ENCODE measurements at regions of chr9 and their contacts with region 1.

Region 1: DNA sequence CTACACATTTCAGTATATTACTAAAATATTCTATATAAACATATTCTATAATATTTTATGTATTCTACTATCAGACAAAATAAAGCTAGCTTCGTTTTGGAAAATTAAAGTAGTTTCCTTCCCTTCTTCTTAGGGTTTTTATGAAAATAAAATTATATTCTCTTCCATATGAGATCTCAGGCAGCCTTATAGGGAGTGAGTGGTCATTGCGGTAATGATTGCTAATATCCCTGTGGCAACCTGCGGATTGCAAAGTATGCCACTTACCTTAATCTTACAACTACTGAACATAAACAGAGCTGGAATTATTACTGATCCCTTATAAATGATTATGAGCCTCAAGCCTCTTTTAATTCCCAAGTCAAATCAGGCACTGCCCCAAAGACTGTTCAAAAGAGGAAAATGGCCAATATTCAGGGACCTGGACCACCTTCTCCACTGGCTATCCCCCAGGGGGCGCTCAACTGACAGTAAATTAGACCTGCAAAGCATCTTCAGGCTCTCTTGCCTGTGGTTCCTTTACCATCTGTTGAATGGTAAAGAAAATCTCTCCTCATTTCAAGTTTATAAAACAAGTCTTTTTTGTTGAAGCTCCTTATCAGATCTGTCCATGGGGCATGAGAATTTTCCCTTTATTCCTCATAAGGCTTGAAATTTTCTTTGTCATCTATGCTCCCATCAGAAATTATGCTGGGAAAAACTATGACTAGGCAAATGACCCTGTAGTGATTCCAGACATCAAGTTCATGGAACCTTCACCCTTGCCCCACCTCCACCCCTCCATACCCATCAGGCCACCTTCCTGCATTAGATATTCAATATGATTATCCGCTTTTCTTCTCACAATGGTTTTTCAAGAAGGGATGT is 163.9 kb downstream of the CEMIP2 start:
- DNase-seq: peak; percentile 76 to 81 (median 78)
- ATAC-seq: peak in 3 of 4 donors; percentile 68 to 86 (median 78)
- H3K4me3 ChIP-seq: no peak overlapping the region
- H3K27ac ChIP-seq: no peak overlapping the region
- H3K4me1 ChIP-seq: peaks cover 0 to 3% (median 0%) of the 10 kb centered on the region in 12 donors
- H3K27me3 ChIP-seq: no peaks in the 10 kb centered on the region
- CTCF ChIP-seq: peak; percentile 64 to 83 (median 76)
- POLR2A ChIP-seq: no peak

Region 2: DNA sequence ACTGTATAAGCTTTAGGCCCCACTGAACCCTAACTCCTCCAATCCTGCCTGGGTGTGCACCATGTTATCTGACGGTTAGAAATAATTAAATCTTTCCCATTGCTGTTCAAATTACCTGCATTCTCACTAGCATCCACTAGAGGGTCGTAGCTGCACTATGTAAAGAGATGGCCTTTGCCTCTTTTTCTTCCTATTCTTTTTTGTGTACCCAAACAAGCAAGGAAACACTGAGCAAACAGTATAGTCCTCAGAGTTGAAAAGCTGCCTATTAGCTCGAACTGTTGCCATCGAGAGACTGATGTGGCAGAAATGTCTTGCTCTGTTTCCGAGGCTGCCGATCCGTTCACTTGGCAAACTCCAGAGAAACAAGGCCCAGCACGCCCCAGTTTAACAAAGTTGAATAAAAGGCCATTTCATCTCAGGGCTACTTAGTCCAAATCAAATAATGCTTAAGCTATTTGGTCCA is 319.2 kb before region 1 on chr9:
- intact Hi-C with region 1: loop called in 1 of 10 experiments (anchors 5 kb)
- DNase-seq: peak in 2 of 5 donors; percentile 17 to 31
- ATAC-seq: peak; percentile 65 to 76 (median 72)
- H3K4me3 ChIP-seq: no peak overlapping the region
- H3K27ac ChIP-seq: no peak overlapping the region
- H3K4me1 ChIP-seq: peaks cover 0 to 5% (median 0%) of the 10 kb centered on the region in 12 donors
- H3K27me3 ChIP-seq: no peaks in the 10 kb centered on the region
- CTCF ChIP-seq: peak; percentile 72 to 91 (median 84)
- POLR2A ChIP-seq: no peak

Region 3: GRCh38 chr9:71620746-71621145 is 16.3 kb after region 1 on chr9:
- intact Hi-C with region 1: no loop called
- DNase-seq: no peak
- ATAC-seq: no peak
- H3K4me3 ChIP-seq: no peak overlapping the region
- H3K27ac ChIP-seq: no peak overlapping the region
- H3K4me1 ChIP-seq: no peaks in the 10 kb centered on the region
- H3K27me3 ChIP-seq: no peaks in the 10 kb centered on the region
- CTCF ChIP-seq: no peak
- POLR2A ChIP-seq: no peak

Region 4: DNA sequence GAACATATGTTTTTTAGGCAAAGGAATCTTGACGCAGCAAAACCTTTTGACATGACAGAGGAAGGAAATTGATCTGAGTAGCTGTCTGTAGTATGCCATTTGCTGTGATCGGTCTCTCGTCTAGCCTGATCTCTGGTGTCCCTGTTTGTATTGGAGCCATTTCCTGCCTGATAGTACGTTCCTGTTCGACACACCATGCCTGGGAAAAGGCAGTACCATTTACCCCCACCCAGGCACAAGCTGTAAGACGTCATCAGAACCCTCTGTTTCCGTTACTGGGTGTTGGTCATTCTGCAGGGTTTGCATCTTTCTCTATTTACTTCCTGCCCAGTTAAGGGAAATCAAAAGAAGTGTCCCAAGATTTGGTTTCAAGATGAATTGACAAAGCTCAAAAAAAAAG is 34.2 kb after region 1 on chr9:
- intact Hi-C with region 1: no loop called
- DNase-seq: peak in 4 of 5 donors; percentile 46 to 57 (median 53)
- ATAC-seq: peak; percentile 86 to 96 (median 94)
- H3K4me3 ChIP-seq: peak overlapping the region in 1 of 12 donors; percentile 6
- H3K27ac ChIP-seq: peak overlapping the region; percentile 9 to 92 (median 55)
- H3K4me1 ChIP-seq: peaks cover 0 to 58% (median 0%) of the 10 kb centered on the region in 12 donors
- H3K27me3 ChIP-seq: no peaks in the 10 kb centered on the region
- CTCF ChIP-seq: no peak
- POLR2A ChIP-seq: no peak

Region 5: DNA sequence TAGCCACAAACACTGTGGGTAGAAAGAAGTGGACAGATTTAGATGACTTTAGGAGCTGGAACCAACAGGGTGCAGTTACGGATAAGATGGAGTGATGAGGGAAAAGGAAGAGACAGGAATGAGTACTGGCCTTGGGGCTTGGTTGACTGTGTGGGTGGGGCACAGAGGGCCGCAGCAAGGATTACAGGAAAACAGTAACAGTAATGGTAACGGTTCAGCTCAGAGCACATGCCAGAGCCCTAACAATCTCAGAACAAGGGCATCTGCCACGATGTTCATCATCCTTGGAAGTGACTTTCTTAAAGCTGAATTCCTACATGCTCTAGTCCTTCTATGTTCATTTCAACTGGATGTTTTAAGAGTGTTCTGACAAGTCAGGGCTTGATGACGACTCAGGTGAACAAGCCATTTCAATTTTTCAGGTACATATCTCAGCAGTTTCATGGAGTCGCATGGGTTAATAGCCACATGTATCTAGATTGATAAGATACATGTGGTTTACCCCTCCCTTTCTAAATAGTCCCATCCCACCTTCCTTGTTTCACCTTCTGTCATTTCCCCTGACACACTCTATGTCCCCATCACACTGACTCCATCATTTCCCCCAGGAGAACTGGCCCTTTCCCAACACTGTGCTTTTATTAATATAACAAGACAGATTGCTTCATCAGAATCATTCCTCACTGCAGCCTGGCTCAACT is 98.9 kb after region 1 on chr9:
- intact Hi-C with region 1: loop called in 1 of 10 experiments (anchors 10 kb)
- DNase-seq: no peak
- ATAC-seq: peak in 3 of 4 donors; percentile 24 to 79 (median 72)
- H3K4me3 ChIP-seq: no peak overlapping the region
- H3K27ac ChIP-seq: no peak overlapping the region
- H3K4me1 ChIP-seq: peaks cover 0 to 19% (median 4%) of the 10 kb centered on the region in 12 donors
- H3K27me3 ChIP-seq: no peaks in the 10 kb centered on the region
- CTCF ChIP-seq: no peak
- POLR2A ChIP-seq: no peak

Region 6: GRCh38 chr9:71716138-71716909 is 111.9 kb after region 1 on chr9:
- intact Hi-C with region 1: loop called in 6 of 10 experiments (anchors 2 to 10 kb)
- DNase-seq: no peak
- ATAC-seq: no peak
- H3K4me3 ChIP-seq: no peak overlapping the region
- H3K27ac ChIP-seq: no peak overlapping the region
- H3K4me1 ChIP-seq: peaks cover 0 to 10% (median 0%) of the 10 kb centered on the region in 12 donors
- H3K27me3 ChIP-seq: no peaks in the 10 kb centered on the region
- CTCF ChIP-seq: peak; percentile 35 to 60 (median 44)
- POLR2A ChIP-seq: no peak

Region 7: GRCh38 chr9:71819115-71819739 is 214.8 kb after region 1 on chr9:
- intact Hi-C with region 1: loop called in 2 of 10 experiments (anchors 2 to 5 kb)
- DNase-seq: peak in 2 of 5 donors; percentile 16 to 25
- ATAC-seq: no peak
- H3K4me3 ChIP-seq: no peak overlapping the region
- H3K27ac ChIP-seq: no peak overlapping the region
- H3K4me1 ChIP-seq: peaks cover 0 to 7% (median 0%) of the 10 kb centered on the region in 12 donors
- H3K27me3 ChIP-seq: no peaks in the 10 kb centered on the region
- CTCF ChIP-seq: peak; percentile 62 to 87 (median 78)
- POLR2A ChIP-seq: no peak

Region 8: GRCh38 chr9:72022841-72023240 is 418.4 kb after region 1 on chr9:
- intact Hi-C with region 1: loop called in 1 of 10 experiments (anchors 5 kb)
- DNase-seq: no peak
- ATAC-seq: no peak
- H3K4me3 ChIP-seq: no peak overlapping the region
- H3K27ac ChIP-seq: no peak overlapping the region
- H3K4me1 ChIP-seq: peaks cover 0 to 3% (median 0%) of the 10 kb centered on the region in 12 donors
- H3K27me3 ChIP-seq: no peaks in the 10 kb centered on the region
- CTCF ChIP-seq: no peak
- POLR2A ChIP-seq: no peak

Measured in heart left ventricle (tissue), 16 donors.